HEK293 (cell line): ENCODE measurements at regions of chr12 and their contacts with region 1.

Region 1: GRCh38 chr12:77010691-77011548 is 54.4 kb downstream of the E2F7 start:
- H3K4me3 ChIP-seq: no peak overlapping the region
- H3K27ac ChIP-seq: no peak overlapping the region
- H3K4me1 ChIP-seq: no peaks in the 10 kb centered on the region
- CTCF ChIP-seq: peak; percentile 59

Region 2: GRCh38 chr12:76790564-76791552 is 220.1 kb before region 1 on chr12:
- CTCF ChIA-PET with region 1: interaction called, 15 read pairs
- POLR2A ChIA-PET with region 1: no interaction called
- H3K4me3 ChIP-seq: no peak overlapping the region
- H3K27ac ChIP-seq: no peak overlapping the region
- H3K4me1 ChIP-seq: no peaks in the 10 kb centered on the region
- CTCF ChIP-seq: peak; percentile 26; the same call in 1 of the 2 replicates

Region 3: GRCh38 chr12:76855271-76855670 is 155.6 kb before region 1 on chr12:
- CTCF ChIA-PET with region 1: interaction called, 14 read pairs
- POLR2A ChIA-PET with region 1: interaction called, 7 read pairs
- H3K4me3 ChIP-seq: no peak overlapping the region
- H3K27ac ChIP-seq: no peak overlapping the region
- H3K4me1 ChIP-seq: no peaks in the 10 kb centered on the region
- CTCF ChIP-seq: no peak

Region 4: DNA sequence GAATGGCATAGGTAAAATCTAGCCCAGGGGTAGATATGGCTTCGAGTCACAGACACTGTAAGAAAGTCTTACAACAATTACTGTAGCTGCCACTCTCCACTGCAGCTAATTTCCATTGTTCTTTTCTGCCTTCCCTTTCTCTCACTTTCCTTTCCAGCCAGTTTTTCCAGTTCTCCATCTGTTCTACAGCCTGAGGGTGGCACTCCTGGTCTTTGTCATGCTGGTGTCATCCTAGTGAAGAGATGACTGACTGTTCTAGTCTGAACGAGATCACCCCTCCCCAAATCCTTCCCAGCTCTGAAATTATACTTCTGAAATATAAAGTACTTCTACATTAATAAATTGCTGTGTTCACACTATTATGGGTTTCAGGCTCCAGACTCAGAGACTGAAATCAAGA is 57.9 kb before region 1 on chr12:
- CTCF ChIA-PET with region 1: interaction called, 13 read pairs
- POLR2A ChIA-PET with region 1: no interaction called
- H3K4me3 ChIP-seq: no peak overlapping the region
- H3K27ac ChIP-seq: no peak overlapping the region
- H3K4me1 ChIP-seq: no peaks in the 10 kb centered on the region
- CTCF ChIP-seq: peak; percentile 34; the same call in 1 of the 2 replicates

Region 5: DNA sequence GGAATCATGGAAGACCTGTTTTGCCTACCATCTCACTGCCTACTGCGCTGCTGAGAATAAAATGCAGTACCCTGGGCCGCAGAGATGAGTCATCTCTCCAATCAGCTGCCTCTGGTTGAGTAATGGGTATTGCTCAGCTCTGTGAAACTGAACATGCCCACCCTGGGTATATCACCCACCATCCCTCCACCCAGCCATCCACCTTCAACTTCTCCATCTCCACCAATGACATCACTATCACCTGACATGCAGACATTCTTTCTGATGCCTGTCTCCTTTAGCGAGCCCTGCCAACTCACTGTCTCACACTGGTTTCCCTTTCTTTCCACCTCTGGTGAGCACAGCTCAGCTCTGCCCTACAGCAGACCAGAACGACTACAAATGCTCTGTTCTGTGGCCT is 20.8 kb after region 1 on chr12:
- CTCF ChIA-PET with region 1: interaction called, 13 read pairs
- POLR2A ChIA-PET with region 1: no interaction called
- H3K4me3 ChIP-seq: no peak overlapping the region
- H3K27ac ChIP-seq: no peak overlapping the region
- H3K4me1 ChIP-seq: no peaks in the 10 kb centered on the region
- CTCF ChIP-seq: no peak